Activated B cell treated with CpG ODN at 0.5 μM for 24 hours (primary cell): ENCODE measurements at regions of chr11 and their contacts with region 1.

Region 1: DNA sequence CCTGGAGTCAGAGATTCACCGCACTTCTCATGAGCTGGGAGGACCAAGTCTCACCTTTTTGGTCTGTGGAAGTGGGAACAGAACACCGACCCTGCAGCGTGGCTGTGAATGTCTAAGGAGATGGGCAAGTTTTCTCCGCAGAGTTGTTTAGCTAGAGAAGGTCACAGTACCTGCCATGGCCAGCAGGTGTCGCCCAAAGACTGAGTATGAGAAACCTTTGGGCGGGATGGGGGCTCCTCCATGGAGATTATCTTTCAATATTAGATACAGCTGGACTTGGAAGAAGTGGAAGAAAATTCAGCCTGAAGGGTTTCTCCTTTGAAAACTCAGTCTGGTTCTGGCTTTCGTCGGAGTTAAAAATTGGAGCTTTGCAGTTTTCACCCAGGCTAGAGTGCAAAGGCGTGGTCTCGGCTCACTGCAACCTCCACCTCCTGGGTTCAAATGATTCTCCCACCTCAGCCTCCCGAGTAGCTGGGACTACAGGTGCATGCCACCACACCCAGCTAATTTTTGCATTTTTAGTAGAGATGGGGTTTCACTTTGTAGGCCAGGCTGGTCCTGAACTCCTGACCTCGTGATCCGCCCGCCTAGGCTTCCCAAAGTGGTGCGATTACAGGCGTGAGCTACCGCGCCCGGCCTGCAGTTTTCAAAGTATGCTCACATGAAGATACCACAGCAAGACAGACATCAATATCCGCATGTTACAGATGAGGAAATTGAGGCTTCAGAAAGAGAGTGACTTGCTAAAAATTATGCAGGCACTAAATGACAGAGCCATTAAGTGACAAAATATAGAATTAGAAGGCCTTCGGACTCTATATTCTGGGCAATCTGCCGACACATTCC is 10.7 kb upstream of the DSCAML1 start:
- DNase-seq: peak; percentile 73
- ATAC-seq: peak; percentile 87
- H3K4me3 Mint-ChIP-seq: no peak overlapping the region
- H3K27ac Mint-ChIP-seq: peak overlapping the region; percentile 38
- H3K4me1 Mint-ChIP-seq: peaks cover 17% of the 10 kb centered on the region
- H3K27me3 Mint-ChIP-seq: peaks cover 5% of the 10 kb centered on the region
- CTCF ChIP-seq: peak; percentile 72

Region 2: DNA sequence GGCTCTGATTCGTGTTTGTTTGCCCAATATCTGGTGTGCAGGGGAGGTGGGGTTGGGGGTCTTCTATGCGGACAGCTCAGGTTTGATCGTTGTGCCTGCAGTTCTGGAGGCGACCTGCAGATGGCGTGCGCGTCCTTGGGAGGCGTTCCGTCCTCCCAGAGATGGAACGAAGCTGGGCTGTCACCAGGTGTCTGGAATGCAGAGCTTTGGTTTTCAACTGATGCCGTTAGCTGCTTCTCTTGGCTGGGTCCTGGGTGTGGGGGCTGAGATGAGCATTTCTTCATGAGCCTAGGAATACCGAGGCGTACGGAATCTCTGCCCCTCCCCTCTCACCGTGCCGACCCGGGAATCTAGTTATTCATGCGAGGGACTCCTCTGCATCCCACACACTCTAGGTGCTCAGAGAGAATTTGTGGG is 381.4 kb before region 1 on chr11:
- CTCF ChIA-PET with region 1: interaction called, 14 read pairs
- POLR2A ChIA-PET with region 1: no interaction called
- intact Hi-C with region 1: no loop called
- DNase-seq: peak; percentile 52
- ATAC-seq: peak; percentile 62
- H3K4me3 Mint-ChIP-seq: no peak overlapping the region
- H3K27ac Mint-ChIP-seq: no peak overlapping the region
- H3K4me1 Mint-ChIP-seq: peaks cover 7% of the 10 kb centered on the region
- H3K27me3 Mint-ChIP-seq: peaks cover 7% of the 10 kb centered on the region
- CTCF ChIP-seq: peak; percentile 23

Region 3: GRCh38 chr11:118171269-118172062 is 363.8 kb after region 1 on chr11:
- CTCF ChIA-PET with region 1: interaction called, 30 read pairs
- POLR2A ChIA-PET with region 1: no interaction called
- intact Hi-C with region 1: loop called (anchors 1 kb)
- DNase-seq: peak; percentile 58
- ATAC-seq: peak; percentile 86
- H3K4me3 Mint-ChIP-seq: no peak overlapping the region
- H3K27ac Mint-ChIP-seq: no peak overlapping the region
- H3K4me1 Mint-ChIP-seq: no peaks in the 10 kb centered on the region
- H3K27me3 Mint-ChIP-seq: peaks cover 34% of the 10 kb centered on the region
- CTCF ChIP-seq: peak; percentile 81